ENCODE measurements at regions of chr19 and their contacts with region 1.

Region 1: DNA sequence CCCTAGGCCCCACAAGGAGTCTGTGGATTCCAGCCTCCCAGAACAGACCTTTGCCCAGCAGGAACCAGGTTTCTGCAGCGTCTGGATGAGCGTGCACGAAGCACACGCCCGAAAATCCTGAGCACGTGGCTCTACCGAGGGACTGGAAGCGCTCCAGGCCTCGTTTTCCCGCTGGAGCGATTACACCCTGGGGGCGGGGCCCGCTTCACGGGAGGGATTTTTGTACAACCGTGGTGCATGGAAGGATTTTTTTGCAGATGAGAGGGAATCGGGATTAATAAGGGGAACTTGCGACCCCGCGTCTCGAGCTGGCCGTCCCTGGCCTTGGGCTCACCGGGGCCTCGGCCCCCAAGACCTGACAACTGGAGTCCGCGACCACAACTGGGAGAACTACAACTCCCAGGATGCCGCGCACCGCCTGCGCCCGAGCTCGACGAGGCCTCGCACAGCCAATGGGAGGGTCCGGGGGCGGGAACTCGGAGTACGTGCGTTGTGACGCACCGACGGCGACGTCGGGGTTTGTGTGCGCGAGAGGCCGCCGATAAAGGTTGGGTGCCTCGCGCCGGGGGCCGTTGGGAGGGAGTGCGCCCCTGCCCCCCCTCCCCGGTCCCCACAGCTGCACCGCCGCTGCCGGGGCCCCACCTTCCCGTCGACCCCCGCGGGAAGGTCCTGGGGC is at the start of gene ZNF628:
- DNase-seq: peak in 9 of 10 donors; percentile 95 to 98 (median 96)
- ATAC-seq: peak; percentile 94 to 96
- H3K4me3 Mint-ChIP-seq: peak within 1 kb of the TSS; percentile 82 to 92 (median 90)
- H3K27ac Mint-ChIP-seq: peak within 1 kb of the TSS; percentile 84 to 98 (median 94)
- H3K4me1 Mint-ChIP-seq: peaks cover 22 to 40% (median 30%) of the 10 kb centered on the region in 4 donors
- H3K27me3 Mint-ChIP-seq: no peaks in the 10 kb centered on the region
- polyA plus RNA-seq, gene ZNF628: 0.26 to 0.42 (median 0.32) TPM

Region 2: DNA sequence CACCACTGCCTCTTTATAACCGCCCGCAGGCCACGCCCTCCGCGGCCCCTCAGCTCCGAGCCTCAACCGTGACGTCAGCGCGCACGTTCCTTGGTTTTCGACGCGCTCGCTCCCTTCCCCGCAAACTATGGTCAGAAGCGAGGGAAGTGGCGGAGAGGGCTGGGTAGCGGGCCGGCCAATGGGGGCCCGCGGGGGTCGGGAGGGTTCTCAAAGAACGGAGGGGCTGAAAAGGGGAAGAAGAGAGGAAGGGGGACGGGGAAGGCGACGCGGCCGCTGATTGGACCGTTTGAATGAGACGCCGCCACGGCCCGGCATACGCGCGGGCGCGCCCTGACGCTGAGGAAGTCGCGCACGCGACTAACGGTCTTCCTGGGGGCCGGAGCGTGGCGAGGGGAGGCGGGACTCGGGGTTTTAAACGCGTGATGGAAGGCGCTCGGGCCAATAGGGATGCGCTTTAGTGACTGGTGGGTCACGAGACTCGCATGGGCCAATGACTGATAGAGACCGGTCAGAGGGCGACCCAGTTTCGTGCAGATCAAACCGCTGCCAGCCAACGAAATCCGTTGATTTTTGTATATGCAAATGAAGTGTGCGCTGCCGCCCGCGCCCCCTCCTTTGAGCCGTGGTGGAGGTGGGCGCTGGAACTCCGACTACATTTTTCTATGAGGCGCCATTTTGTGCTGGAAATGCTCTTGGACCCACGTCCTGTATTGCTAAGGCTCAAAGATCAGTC is 68.3 kb before region 1 on chr19:
- POLR2A ChIA-PET with region 1: interaction called, 12 read pairs
- DNase-seq: peak; percentile 94 to 99 (median 97)
- ATAC-seq: peak; percentile 91 to 92
- H3K4me3 Mint-ChIP-seq: peak overlapping the region; percentile 88 to 98 (median 94)
- H3K27ac Mint-ChIP-seq: peak overlapping the region; percentile 93 to 100 (median 99)
- H3K4me1 Mint-ChIP-seq: peaks cover 20 to 39% (median 30%) of the 10 kb centered on the region in 4 donors
- H3K27me3 Mint-ChIP-seq: peaks cover 0 to 3% (median 0%) of the 10 kb centered on the region in 5 donors

Region 3: DNA sequence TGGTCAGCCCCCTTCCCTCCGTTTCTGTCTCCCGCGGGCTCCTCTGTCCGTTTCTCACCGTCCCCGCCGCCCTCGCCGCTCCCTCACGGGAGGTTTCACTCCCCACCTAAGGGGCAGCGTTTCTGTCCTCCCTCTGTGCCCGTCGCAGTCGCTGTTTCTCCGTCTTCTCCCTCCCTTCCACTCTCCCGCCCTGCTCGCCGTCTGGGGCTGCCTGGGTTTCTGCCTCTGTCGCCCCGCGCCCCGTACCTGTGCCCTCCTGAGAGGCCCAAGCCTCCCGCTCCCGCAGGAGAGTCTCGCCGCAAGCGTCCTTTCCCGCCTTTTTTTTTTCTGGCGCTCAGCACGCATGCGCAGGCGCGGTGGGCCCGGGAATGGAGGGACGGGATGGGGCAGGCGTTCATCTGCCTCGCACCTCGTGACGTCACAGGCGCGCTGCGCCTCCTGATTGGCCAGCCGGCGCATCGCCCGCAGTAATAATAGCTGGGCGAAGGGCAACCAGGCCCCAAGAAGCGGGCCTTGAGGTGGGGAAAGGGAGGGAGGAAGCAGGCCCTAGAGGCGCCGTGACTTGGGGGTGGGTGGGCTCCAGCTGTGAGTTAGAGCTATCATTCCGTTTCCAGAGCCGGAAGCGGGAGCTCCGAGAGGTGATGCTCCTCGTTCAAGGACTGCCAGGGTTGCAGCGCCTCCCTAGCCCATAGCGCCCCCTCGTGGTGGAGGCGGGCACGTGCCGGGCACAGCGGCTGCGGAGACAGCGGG is 27.4 kb after region 1 on chr19:
- POLR2A ChIA-PET with region 1: interaction called, 16 read pairs
- DNase-seq: peak; percentile 82 to 98 (median 93)
- ATAC-seq: peak; percentile 94 to 95
- H3K4me3 Mint-ChIP-seq: peak overlapping the region; percentile 77 to 90 (median 84)
- H3K27ac Mint-ChIP-seq: peak overlapping the region; percentile 43 to 94 (median 86)
- H3K4me1 Mint-ChIP-seq: peaks cover 11 to 15% (median 13%) of the 10 kb centered on the region in 4 donors
- H3K27me3 Mint-ChIP-seq: peaks cover 0 to 7% (median 1%) of the 10 kb centered on the region in 5 donors

Region 4: DNA sequence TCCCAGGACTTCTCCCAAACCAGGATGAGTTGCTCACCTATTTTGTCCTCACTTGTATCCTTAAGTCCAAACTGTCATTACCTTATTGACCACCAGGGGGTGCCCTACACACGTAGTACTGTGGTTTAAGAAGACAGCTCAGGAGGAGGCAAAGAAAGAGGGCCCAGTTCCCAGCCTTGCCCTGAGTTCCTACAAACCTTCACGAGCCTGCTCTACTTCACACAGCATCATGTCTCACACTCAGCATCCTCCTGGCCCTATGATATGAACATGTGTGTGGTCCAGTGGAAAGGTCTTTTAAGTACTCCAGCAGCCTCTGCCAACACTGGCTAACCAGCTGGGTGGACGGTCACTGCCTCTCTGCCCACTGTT is 156.2 kb after region 1 on chr19:
- POLR2A ChIA-PET with region 1: interaction called, 12 read pairs
- DNase-seq: peak; percentile 66 to 97 (median 89)
- ATAC-seq: peak; percentile 36 to 41
- H3K4me3 Mint-ChIP-seq: peak overlapping the region in 8 of 10 donors; percentile 7 to 83 (median 34)
- H3K27ac Mint-ChIP-seq: peak overlapping the region; percentile 6 to 93 (median 87)
- H3K4me1 Mint-ChIP-seq: peaks cover 34 to 52% (median 46%) of the 10 kb centered on the region in 4 donors
- H3K27me3 Mint-ChIP-seq: no peaks in the 10 kb centered on the region

Region 5: GRCh38 chr19:55653758-55654539 is 177.7 kb after region 1 on chr19:
- POLR2A ChIA-PET with region 1: interaction called, 20 read pairs
- DNase-seq: peak; percentile 99 to 100 (median 100)
- ATAC-seq: peak; percentile 80 to 81
- H3K4me3 Mint-ChIP-seq: peak overlapping the region; percentile 88 to 99 (median 97)
- H3K27ac Mint-ChIP-seq: peak overlapping the region; percentile 97 to 100 (median 99)
- H3K4me1 Mint-ChIP-seq: peaks cover 25 to 56% (median 54%) of the 10 kb centered on the region in 4 donors
- H3K27me3 Mint-ChIP-seq: no peaks in the 10 kb centered on the region